ENCODE measurements at regions of chr3 and their contacts with region 1.

Region 1: GRCh38 chr3:101195951-101196713 is 124.2 kb downstream of the IMPG2 start:
- DNase-seq: peak; percentile 55
- H3K4me3 ChIP-seq: no peak overlapping the region
- H3K27ac ChIP-seq: no peak overlapping the region
- H3K4me1 ChIP-seq: peaks cover 5 to 30% (median 24%) of the 10 kb centered on the region in 4 donors
- H3K27me3 ChIP-seq: no peaks in the 10 kb centered on the region
- CTCF ChIP-seq: peak; percentile 63 to 71 (median 67)
- EP300 ChIP-seq: no peak
- POLR2A ChIP-seq: no peak

Region 2: DNA sequence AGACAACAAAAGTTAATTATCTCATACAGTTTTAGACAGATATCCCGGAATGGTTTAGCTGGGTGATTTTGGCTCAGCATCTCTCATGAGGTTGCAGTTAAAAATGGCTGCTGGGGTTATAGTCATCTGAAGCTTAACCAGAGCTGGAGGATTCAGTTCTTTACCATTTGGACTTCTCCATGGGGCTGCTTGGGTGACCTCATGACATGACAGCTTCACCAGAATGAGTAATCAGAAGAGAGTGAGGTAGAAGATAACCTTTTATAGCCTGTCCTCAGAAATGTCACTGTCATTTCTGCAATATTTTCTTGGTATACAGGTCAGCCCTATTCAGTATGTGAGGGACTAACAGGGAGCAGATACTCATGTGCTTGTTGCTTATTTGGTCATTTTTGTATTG is 455.9 kb before region 1 on chr3:
- intact Hi-C with region 1: loop called (anchors 10 kb)
- DNase-seq: no peak
- H3K4me3 ChIP-seq: no peak overlapping the region
- H3K27ac ChIP-seq: no peak overlapping the region
- H3K4me1 ChIP-seq: peaks cover 0 to 5% (median 0%) of the 10 kb centered on the region in 4 donors
- H3K27me3 ChIP-seq: no peaks in the 10 kb centered on the region
- CTCF ChIP-seq: no peak
- EP300 ChIP-seq: no peak
- POLR2A ChIP-seq: no peak

Region 3: DNA sequence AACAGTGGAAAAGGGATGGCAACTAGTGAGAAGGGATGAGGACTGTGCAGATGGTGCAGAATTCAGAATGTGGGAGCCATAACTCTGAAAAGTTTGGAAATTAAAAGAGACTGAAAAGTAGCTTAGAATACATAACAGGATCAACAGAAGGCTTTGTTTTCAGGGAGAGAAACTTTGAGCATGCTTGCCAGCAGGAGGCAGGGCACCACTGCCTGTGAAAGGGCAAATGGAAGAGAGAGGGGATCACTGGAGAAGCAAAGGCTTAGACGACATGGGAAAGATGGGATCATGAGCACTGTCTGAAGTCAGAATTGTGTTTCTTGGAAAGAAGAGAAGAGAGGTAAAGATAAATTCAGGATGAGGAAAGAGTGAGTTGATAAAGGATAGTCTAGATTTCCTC is 302.5 kb before region 1 on chr3:
- intact Hi-C with region 1: loop called (anchors 2 kb)
- DNase-seq: no peak
- H3K4me3 ChIP-seq: no peak overlapping the region
- H3K27ac ChIP-seq: no peak overlapping the region
- H3K4me1 ChIP-seq: peaks cover 0 to 4% (median 0%) of the 10 kb centered on the region in 4 donors
- H3K27me3 ChIP-seq: no peaks in the 10 kb centered on the region
- CTCF ChIP-seq: peak; percentile 53 to 61 (median 60)
- EP300 ChIP-seq: no peak
- POLR2A ChIP-seq: no peak

Region 4: GRCh38 chr3:101069901-101070798 is 126.0 kb before region 1 on chr3:
- intact Hi-C with region 1: loop called (anchors 5 kb)
- DNase-seq: no peak
- H3K4me3 ChIP-seq: no peak overlapping the region
- H3K27ac ChIP-seq: no peak overlapping the region
- H3K4me1 ChIP-seq: peaks cover 3 to 40% (median 24%) of the 10 kb centered on the region in 4 donors
- H3K27me3 ChIP-seq: no peaks in the 10 kb centered on the region
- CTCF ChIP-seq: peak; percentile 39 to 69 (median 46)
- EP300 ChIP-seq: no peak
- POLR2A ChIP-seq: no peak